Heart left ventricle (tissue), 16 donors: ENCODE measurements at regions of chr16 and their contacts with region 1.

Region 1: GRCh38 chr16:3938848-3939624 is 58.5 kb upstream of the CREBBP start:
- DNase-seq: peak in 4 of 5 donors; percentile 47 to 88 (median 59)
- ATAC-seq: peak; percentile 57 to 89 (median 84)
- H3K4me3 ChIP-seq: peak overlapping the region; percentile 19 to 66 (median 53)
- H3K27ac ChIP-seq: peak overlapping the region in 2 of 12 donors; percentile 15 to 39
- H3K4me1 ChIP-seq: peaks cover 0 to 12% (median 6%) of the 10 kb centered on the region in 12 donors
- H3K27me3 ChIP-seq: no peaks in the 10 kb centered on the region
- CTCF ChIP-seq: peak; percentile 92 to 100 (median 97)
- POLR2A ChIP-seq: no peak

Region 2: DNA sequence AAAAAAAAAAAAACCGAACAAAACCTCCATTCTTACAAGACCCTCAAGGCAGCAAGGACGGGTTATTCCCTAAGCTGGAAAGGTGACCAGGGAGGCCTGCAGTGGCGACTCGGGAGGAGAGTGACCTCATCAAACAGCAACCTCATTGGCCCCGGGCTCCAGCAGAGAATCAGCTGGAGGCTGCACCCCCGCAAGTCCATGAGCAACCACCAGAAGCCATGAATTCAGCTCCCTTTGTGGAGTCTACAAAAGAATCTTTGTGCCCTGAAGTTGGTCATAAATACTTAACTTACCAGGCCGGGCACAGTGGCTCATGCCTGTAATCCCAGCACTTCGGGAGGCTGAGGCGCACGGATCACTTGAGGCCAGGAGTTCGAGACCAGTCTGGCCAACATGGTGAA is 22.4 kb after region 1 on chr16:
- intact Hi-C with region 1: loop called in 1 of 10 experiments (anchors 1 kb)
- DNase-seq: no peak
- ATAC-seq: no peak
- H3K4me3 ChIP-seq: peak overlapping the region in 6 of 12 donors; percentile 38 to 59 (median 56)
- H3K27ac ChIP-seq: peak overlapping the region in 10 of 12 donors; percentile 53 to 84 (median 70)
- H3K4me1 ChIP-seq: peaks cover 0 to 51% (median 38%) of the 10 kb centered on the region in 12 donors
- H3K27me3 ChIP-seq: no peaks in the 10 kb centered on the region
- CTCF ChIP-seq: no peak
- POLR2A ChIP-seq: no peak

Region 3: GRCh38 chr16:3971706-3972105 is 32.7 kb after region 1 on chr16:
- intact Hi-C with region 1: loop called in 1 of 10 experiments (anchors 1 kb)
- DNase-seq: no peak
- ATAC-seq: peak; percentile 65 to 86 (median 80)
- H3K4me3 ChIP-seq: no peak overlapping the region
- H3K27ac ChIP-seq: peak overlapping the region in 1 of 12 donors; percentile 17
- H3K4me1 ChIP-seq: peaks cover 0 to 11% (median 0%) of the 10 kb centered on the region in 12 donors
- H3K27me3 ChIP-seq: no peaks in the 10 kb centered on the region
- CTCF ChIP-seq: no peak
- POLR2A ChIP-seq: no peak

Region 4: DNA sequence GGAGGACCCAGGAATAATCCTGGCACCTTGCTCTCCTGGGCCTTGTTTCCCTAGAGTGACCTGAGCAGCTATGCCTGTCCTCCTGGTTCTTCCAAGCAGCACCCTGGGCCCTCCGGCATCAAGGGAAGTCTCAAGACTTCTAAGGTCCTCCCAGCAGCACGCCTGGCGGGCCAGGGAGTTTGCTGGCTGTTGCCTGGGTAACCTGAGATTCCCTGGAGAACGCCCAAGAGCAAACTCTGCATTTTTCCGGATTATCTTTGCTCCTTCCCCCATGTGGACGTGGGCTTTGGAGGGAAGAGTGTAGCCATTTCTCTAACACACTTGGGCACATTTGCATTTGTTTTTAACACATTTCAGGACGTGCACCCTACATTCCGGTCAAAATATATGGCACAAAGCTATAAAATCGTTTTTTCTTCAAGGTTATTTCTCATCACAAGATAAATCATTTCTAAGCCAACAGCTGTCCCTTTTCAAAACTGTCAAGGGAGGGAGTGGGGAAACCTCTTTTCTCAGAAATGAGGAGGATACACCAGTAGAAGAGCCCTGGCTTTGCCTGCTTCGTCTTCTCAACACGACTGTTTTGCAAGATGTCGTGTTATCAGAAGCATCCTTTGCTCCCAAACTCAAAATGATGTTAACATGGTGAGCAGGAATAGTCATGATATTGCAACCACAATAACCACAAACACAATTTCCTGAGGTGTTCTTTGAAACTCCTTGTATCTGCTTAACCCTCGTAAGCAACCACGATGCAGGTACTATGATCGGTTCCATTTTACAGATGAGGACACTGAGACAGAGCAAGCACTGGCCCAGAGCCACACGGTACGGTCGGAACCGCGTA is 60.7 kb after region 1 on chr16:
- intact Hi-C with region 1: loop called in 1 of 10 experiments (anchors 10 kb)
- DNase-seq: peak; percentile 52 to 81 (median 63)
- ATAC-seq: peak; percentile 17 to 68 (median 56)
- H3K4me3 ChIP-seq: peak overlapping the region in 3 of 12 donors; percentile 6 to 17 (median 10)
- H3K27ac ChIP-seq: peak overlapping the region in 8 of 12 donors; percentile 8 to 72 (median 52)
- H3K4me1 ChIP-seq: peaks cover 0 to 34% (median 15%) of the 10 kb centered on the region in 12 donors
- H3K27me3 ChIP-seq: no peaks in the 10 kb centered on the region
- CTCF ChIP-seq: no peak
- POLR2A ChIP-seq: no peak